Common myeloid progenitor, CD34-positive (primary cell): ENCODE measurements at regions of chr6 and their contacts with region 1.

Region 1: DNA sequence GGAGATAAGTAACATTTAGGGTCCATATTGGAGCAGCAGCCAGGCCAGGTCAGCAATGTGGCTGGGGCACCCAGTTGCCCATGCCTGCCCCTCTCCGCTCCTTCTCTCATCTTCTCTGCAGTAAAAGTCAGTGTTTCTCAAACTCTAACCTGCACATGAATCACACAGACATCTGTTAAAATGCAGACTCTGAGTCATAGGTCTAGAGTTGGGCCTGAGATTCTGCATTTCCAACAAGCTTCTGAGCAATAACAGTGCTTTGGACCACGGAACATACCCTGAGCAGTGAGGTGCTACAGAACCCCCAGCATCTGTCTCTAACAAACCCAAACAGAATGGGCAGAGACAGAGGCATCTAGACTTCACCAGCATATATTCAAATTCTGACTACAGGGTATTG is 10.1 kb downstream of the PHF10 start:
- DNase-seq: no peak
- H3K4me3 ChIP-seq: no peak overlapping the region
- H3K27ac ChIP-seq: no peak overlapping the region
- H3K4me1 ChIP-seq: no peaks in the 10 kb centered on the region
- H3K27me3 ChIP-seq: no peaks in the 10 kb centered on the region

Region 2: GRCh38 chr6:169654598-169655391 is 59.4 kb before region 1 on chr6:
- CTCF ChIA-PET with region 1: no interaction called
- POLR2A ChIA-PET with region 1: no interaction called
- DNase-seq: peak; percentile 73 to 91 (median 86)
- H3K4me3 ChIP-seq: peak overlapping the region; percentile 40 to 83 (median 58)
- H3K27ac ChIP-seq: no peak overlapping the region
- H3K4me1 ChIP-seq: peaks cover 0 to 7% (median 4%) of the 10 kb centered on the region in 4 experiments
- H3K27me3 ChIP-seq: no peaks in the 10 kb centered on the region

Region 3: GRCh38 chr6:169689247-169689646 is 24.9 kb before region 1 on chr6:
- CTCF ChIA-PET with region 1: no interaction called
- POLR2A ChIA-PET with region 1: no interaction called
- DNase-seq: no peak
- H3K4me3 ChIP-seq: no peak overlapping the region
- H3K27ac ChIP-seq: no peak overlapping the region
- H3K4me1 ChIP-seq: no peaks in the 10 kb centered on the region
- H3K27me3 ChIP-seq: no peaks in the 10 kb centered on the region

Region 4: GRCh38 chr6:169701954-169702839 is 12.0 kb before region 1 on chr6 and contains the starts of genes C6orf120 and WDR27:
- CTCF ChIA-PET with region 1: interaction called, 14 read pairs
- POLR2A ChIA-PET with region 1: interaction called, 4 read pairs
- DNase-seq: peak; percentile 97 to 99 (median 99)
- H3K4me3 ChIP-seq: peak within 1 kb of the TSS; percentile 86 to 98 (median 92)
- H3K27ac ChIP-seq: peak within 1 kb of the TSS; percentile 75 to 91
- H3K4me1 ChIP-seq: peaks cover 15 to 32% (median 23%) of the 10 kb centered on the region in 4 experiments
- H3K27me3 ChIP-seq: no peaks in the 10 kb centered on the region

Region 5: DNA sequence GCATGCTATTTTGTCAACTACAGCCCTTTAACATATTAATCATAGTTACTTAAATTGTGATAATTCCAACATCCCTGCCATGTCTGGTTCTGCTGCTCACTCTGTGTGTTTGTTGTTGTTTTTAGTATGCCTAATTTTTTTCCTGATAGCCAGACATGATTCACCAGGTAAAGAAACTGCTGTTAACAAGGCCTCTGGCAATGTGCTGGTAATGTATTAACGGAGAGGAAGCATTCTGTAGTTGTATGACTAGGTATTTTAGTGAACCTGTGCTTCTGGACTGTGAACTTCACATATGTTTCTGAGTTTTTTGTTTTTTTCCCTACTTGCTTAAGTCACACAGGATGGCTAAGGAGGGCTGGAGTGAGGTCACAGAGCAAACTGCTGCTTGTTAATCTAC is 32.4 kb after region 1 on chr6:
- CTCF ChIA-PET with region 1: no interaction called
- POLR2A ChIA-PET with region 1: no interaction called
- DNase-seq: no peak
- H3K4me3 ChIP-seq: no peak overlapping the region
- H3K27ac ChIP-seq: no peak overlapping the region
- H3K4me1 ChIP-seq: peaks cover 2 to 13% (median 12%) of the 10 kb centered on the region in 4 experiments
- H3K27me3 ChIP-seq: no peaks in the 10 kb centered on the region

Region 6: GRCh38 chr6:169851641-169852503 is 137.7 kb after region 1 on chr6:
- CTCF ChIA-PET with region 1: no interaction called
- POLR2A ChIA-PET with region 1: no interaction called
- DNase-seq: peak in 2 of 3 donors; percentile 13 to 40
- H3K4me3 ChIP-seq: no peak overlapping the region
- H3K27ac ChIP-seq: no peak overlapping the region
- H3K4me1 ChIP-seq: no peaks in the 10 kb centered on the region
- H3K27me3 ChIP-seq: peaks cover 0 to 3% (median 0%) of the 10 kb centered on the region in 5 experiments